GM13976 (cell line): ENCODE measurements at regions of chr9 and their contacts with region 1.

Region 1: DNA sequence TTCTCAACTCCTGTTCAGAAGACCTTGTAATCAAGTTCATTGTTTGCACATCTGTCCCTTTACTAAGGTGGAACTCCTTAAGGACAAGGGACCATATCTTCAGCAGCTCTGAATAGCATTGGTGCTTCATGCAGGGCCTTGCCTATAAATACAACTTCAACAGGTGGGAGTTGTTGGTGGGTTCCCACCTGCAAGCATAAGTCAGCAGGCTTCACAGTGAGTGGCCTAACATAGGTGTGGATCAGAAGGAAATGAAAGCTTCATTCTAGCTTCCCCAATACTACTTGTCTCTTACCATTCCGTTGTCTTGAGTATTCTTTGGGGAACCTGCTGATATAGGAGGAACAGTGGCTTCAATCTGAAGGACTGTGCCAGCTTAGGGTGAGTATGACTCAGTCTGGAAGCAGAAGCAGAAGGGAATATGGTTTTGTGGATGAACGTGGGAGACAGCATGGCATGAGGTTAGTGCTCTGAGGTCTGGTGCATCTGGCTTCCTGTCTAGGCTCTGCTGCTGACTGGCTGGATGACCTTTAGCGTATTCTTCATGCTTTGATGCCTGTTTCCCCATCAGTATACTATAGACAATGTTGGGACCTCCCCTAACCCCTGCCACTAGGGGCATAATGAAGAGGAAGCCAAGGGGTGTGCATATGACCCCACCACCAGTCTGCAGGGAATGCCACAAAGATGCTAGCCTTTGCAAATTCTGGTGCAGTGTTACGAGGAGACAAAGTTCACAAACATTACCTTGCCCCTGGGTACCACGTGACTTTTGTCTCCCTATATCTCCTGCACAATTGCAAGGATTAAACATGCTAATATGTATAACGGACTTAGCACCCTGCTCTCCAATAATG is 192.3 kb downstream of the PALM2AKAP2 start:
- DNase-seq: no peak
- CTCF ChIP-seq: peak; percentile 15

Region 2: DNA sequence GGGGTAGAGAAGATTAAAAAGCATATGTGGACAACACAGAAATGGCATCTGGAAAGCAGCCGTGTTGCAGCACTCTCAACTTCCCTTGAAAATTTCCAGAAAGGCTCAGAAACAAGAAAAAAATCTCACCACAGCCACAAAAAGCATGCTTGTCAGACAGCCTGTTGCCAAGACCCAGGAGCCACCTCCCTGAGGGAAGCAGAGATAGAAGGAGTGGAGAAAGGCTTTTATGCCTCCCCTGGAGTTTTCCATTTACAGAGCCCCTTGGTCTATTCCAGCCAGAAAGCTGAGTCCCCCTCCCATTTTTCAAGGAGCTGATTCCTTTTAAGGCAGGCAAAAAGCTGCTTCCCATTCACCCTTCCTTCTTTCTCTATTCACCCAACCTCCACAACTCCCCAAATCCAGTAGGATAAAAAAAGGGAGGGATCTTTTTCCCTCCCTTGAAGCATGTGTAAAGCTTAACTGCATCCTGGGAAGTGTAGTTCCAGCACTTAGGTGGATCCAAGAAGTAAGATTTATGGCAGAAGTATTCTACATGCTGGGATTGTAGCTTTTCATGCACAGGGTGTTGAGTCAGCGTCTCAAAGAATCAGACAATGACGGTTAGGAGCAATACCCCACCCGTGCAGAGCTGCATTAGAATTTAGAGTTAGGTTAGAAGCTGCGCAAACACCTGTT is 229.4 kb before region 1 on chr9:
- in situ Hi-C with region 1: no loop called
- DNase-seq: no peak
- CTCF ChIP-seq: no peak

Region 3: DNA sequence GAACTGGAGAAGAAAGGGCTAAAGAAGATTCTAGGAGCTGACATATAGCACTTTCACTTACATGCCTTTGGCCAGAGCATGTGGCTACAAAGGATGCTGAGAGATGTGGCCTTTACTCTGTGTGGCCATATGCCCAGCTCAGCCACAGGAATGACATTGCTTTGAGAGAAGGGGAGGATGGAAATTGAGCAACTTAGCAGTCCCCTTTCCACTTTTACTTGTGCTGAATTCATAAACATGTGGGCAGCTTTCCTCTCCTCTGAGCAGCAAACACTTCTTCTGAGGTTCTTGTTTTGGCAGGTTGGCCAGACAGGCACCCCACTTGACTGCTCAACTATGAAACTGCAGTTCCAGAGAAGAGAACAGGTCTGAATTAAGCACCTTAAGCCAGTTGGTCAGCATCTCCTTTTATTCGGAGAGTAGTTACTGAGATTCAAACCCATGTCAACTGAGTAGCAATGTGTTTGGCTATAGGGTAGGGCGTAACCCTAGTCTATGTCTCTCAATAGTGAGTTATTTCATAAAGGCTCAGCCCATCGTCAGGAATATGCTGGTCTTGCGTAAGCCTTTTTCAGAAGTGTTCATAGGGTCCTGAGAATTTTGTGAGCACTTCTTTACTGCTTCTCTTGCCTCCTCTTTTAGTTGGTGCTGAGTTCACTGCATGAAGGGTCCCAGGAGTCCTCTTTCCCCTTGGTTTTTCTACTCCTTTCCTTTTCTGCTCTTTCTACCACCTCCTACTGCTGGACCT is 57.8 kb before region 1 on chr9:
- in situ Hi-C with region 1: loop called (anchors 5 kb)
- DNase-seq: no peak
- CTCF ChIP-seq: no peak